ENCODE measurements at regions of chr11 and their contacts with region 1.

Region 1: GRCh38 chr11:66438504-66439466 is at the start of gene MRPL11:
- DNase-seq: peak; percentile 95
- ATAC-seq: peak; percentile 98
- H3K4me3 ChIP-seq: peak within 1 kb of the TSS; percentile 71 to 98 (median 78)
- H3K4me3 Mint-ChIP-seq: peak within 1 kb of the TSS; percentile 93
- H3K27ac ChIP-seq: peak within 1 kb of the TSS; percentile 76 to 79
- H3K27ac Mint-ChIP-seq: peak within 1 kb of the TSS; percentile 98
- H3K4me1 ChIP-seq: peaks cover 6 to 10% of the 10 kb centered on the region in 2 donors
- H3K4me1 Mint-ChIP-seq: peaks cover 14% of the 10 kb centered on the region
- H3K27me3 ChIP-seq: no peaks in the 10 kb centered on the region
- H3K27me3 Mint-ChIP-seq: no peaks in the 10 kb centered on the region
- CTCF ChIP-seq: peak; percentile 77
- total RNA-seq, gene MRPL11: 26.7 and 29.2 TPM in 2 replicates

Region 2: GRCh38 chr11:65680192-65680743 is 758.5 kb before region 1 on chr11:
- CTCF ChIA-PET with region 1: no interaction called
- POLR2A ChIA-PET with region 1: no interaction called
- intact Hi-C with region 1: no loop called
- DNase-seq: no peak
- ATAC-seq: no peak
- H3K4me3 ChIP-seq: no peak overlapping the region
- H3K4me3 Mint-ChIP-seq: no peak overlapping the region
- H3K27ac ChIP-seq: no peak overlapping the region
- H3K27ac Mint-ChIP-seq: no peak overlapping the region
- H3K4me1 ChIP-seq: no peaks in the 10 kb centered on the region
- H3K4me1 Mint-ChIP-seq: no peaks in the 10 kb centered on the region
- H3K27me3 ChIP-seq: no peaks in the 10 kb centered on the region
- H3K27me3 Mint-ChIP-seq: peaks cover 4% of the 10 kb centered on the region
- CTCF ChIP-seq: no peak

Region 3: DNA sequence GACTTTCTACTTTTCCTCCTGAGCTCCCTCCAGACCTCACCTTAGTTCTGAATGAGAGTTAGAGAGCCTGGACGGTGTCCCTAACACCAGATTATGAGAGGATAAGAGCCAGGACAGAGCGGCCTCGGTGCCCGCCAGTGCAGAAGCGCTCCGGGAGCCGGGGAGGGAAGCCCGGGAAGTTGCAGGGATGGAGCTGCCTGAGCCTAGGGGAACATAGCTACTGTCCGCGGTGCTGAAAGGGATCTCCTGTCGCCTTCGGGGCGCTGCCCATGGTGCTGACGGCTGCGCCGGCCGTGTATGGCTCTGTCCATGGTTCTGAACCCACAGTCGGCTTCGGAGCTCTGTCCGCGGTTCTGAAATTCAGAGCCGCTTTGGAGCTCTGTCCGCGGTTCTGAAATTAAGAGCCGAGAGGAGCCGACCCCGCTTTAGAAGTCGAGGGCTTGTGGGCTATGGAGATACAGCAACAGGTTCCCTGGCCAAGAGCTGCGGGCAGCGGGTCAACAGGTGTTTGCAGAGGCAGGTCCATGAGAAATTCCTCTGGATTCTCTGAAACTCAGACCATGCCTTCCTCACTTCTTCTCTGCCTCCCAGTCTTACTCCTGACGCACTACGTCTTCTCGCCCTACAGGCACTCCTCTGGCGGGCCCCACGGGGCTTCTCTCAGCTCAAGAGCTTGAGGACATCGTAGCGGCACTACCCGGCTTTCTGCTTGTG is 17.1 kb before region 1 on chr11:
- CTCF ChIA-PET with region 1: interaction called, 9 read pairs
- POLR2A ChIA-PET with region 1: no interaction called
- intact Hi-C with region 1: loop called (anchors 2 kb)
- DNase-seq: peak; percentile 92
- ATAC-seq: peak; percentile 95
- H3K4me3 ChIP-seq: no peak overlapping the region
- H3K4me3 Mint-ChIP-seq: no peak overlapping the region
- H3K27ac ChIP-seq: no peak overlapping the region
- H3K27ac Mint-ChIP-seq: peak overlapping the region; percentile 81
- H3K4me1 ChIP-seq: peaks cover 8 to 15% of the 10 kb centered on the region in 2 donors
- H3K4me1 Mint-ChIP-seq: peaks cover 3% of the 10 kb centered on the region
- H3K27me3 ChIP-seq: peaks cover 0 to 45% (median 34%) of the 10 kb centered on the region in 4 experiments
- H3K27me3 Mint-ChIP-seq: peaks cover 31% of the 10 kb centered on the region
- CTCF ChIP-seq: no peak

Region 4: GRCh38 chr11:66459138-66459778 is 20.5 kb after region 1 on chr11:
- CTCF ChIA-PET with region 1: interaction called, 15 read pairs
- POLR2A ChIA-PET with region 1: interaction called, 4 read pairs
- intact Hi-C with region 1: no loop called
- DNase-seq: peak; percentile 55
- ATAC-seq: peak; percentile 62
- H3K4me3 ChIP-seq: no peak overlapping the region
- H3K4me3 Mint-ChIP-seq: peak overlapping the region; percentile 43
- H3K27ac ChIP-seq: peak overlapping the region; percentile 6 to 37
- H3K27ac Mint-ChIP-seq: peak overlapping the region; percentile 71
- H3K4me1 ChIP-seq: peaks cover 45 to 46% of the 10 kb centered on the region in 2 donors
- H3K4me1 Mint-ChIP-seq: peaks cover 41% of the 10 kb centered on the region
- H3K27me3 ChIP-seq: no peaks in the 10 kb centered on the region
- H3K27me3 Mint-ChIP-seq: no peaks in the 10 kb centered on the region
- CTCF ChIP-seq: no peak

Region 5: GRCh38 chr11:66466225-66467027 is 27.6 kb after region 1 on chr11 and contains the start of gene PELI3:
- CTCF ChIA-PET with region 1: interaction called, 14 read pairs
- POLR2A ChIA-PET with region 1: interaction called, 8 read pairs
- intact Hi-C with region 1: loop called (anchors 1 kb)
- DNase-seq: peak; percentile 97
- ATAC-seq: peak; percentile 92
- H3K4me3 ChIP-seq: peak within 1 kb of the TSS; percentile 19 to 82 (median 71)
- H3K4me3 Mint-ChIP-seq: peak within 1 kb of the TSS; percentile 95
- H3K27ac ChIP-seq: peak within 1 kb of the TSS; percentile 81 to 84
- H3K27ac Mint-ChIP-seq: peak within 1 kb of the TSS; percentile 89
- H3K4me1 ChIP-seq: peaks cover 35 to 40% of the 10 kb centered on the region in 2 donors
- H3K4me1 Mint-ChIP-seq: peaks cover 35% of the 10 kb centered on the region
- H3K27me3 ChIP-seq: no peaks in the 10 kb centered on the region
- H3K27me3 Mint-ChIP-seq: no peaks in the 10 kb centered on the region
- CTCF ChIP-seq: no peak
- total RNA-seq, gene PELI3: 15.6 and 17.0 TPM in 2 replicates

Region 6: GRCh38 chr11:66480117-66480938 is 41.5 kb after region 1 on chr11 and contains the start of gene DPP3:
- CTCF ChIA-PET with region 1: interaction called, 9 read pairs
- POLR2A ChIA-PET with region 1: interaction called, 15 read pairs
- intact Hi-C with region 1: loop called (anchors 1 kb)
- DNase-seq: peak; percentile 96
- ATAC-seq: peak; percentile 97
- H3K4me3 ChIP-seq: peak within 1 kb of the TSS; percentile 36 to 92 (median 71)
- H3K4me3 Mint-ChIP-seq: peak within 1 kb of the TSS; percentile 92
- H3K27ac ChIP-seq: peak within 1 kb of the TSS; percentile 63 to 85
- H3K27ac Mint-ChIP-seq: peak within 1 kb of the TSS; percentile 93
- H3K4me1 ChIP-seq: peaks cover 10 to 20% of the 10 kb centered on the region in 2 donors
- H3K4me1 Mint-ChIP-seq: peaks cover 20% of the 10 kb centered on the region
- H3K27me3 ChIP-seq: no peaks in the 10 kb centered on the region
- H3K27me3 Mint-ChIP-seq: no peaks in the 10 kb centered on the region
- CTCF ChIP-seq: no peak
- total RNA-seq, gene DPP3: 21.5 and 22.7 TPM in 2 replicates

Region 7: GRCh38 chr11:66510271-66510989 is 71.6 kb after region 1 on chr11 and contains the start of gene BBS1:
- CTCF ChIA-PET with region 1: no interaction called
- POLR2A ChIA-PET with region 1: no interaction called
- intact Hi-C with region 1: loop called (anchors 2 kb)
- DNase-seq: peak; percentile 87
- ATAC-seq: peak; percentile 94
- H3K4me3 ChIP-seq: peak within 1 kb of the TSS; percentile 55 to 89 (median 85)
- H3K4me3 Mint-ChIP-seq: peak within 1 kb of the TSS; percentile 91
- H3K27ac ChIP-seq: peak within 1 kb of the TSS in 1 of 2 donors; percentile 40
- H3K27ac Mint-ChIP-seq: peak within 1 kb of the TSS; percentile 61
- H3K4me1 ChIP-seq: peaks cover 11 to 14% of the 10 kb centered on the region in 2 donors
- H3K4me1 Mint-ChIP-seq: peaks cover 16% of the 10 kb centered on the region
- H3K27me3 ChIP-seq: no peaks in the 10 kb centered on the region
- H3K27me3 Mint-ChIP-seq: no peaks in the 10 kb centered on the region
- CTCF ChIP-seq: no peak
- total RNA-seq, gene BBS1: 52.5 and 56.3 TPM in 2 replicates

Region 8: DNA sequence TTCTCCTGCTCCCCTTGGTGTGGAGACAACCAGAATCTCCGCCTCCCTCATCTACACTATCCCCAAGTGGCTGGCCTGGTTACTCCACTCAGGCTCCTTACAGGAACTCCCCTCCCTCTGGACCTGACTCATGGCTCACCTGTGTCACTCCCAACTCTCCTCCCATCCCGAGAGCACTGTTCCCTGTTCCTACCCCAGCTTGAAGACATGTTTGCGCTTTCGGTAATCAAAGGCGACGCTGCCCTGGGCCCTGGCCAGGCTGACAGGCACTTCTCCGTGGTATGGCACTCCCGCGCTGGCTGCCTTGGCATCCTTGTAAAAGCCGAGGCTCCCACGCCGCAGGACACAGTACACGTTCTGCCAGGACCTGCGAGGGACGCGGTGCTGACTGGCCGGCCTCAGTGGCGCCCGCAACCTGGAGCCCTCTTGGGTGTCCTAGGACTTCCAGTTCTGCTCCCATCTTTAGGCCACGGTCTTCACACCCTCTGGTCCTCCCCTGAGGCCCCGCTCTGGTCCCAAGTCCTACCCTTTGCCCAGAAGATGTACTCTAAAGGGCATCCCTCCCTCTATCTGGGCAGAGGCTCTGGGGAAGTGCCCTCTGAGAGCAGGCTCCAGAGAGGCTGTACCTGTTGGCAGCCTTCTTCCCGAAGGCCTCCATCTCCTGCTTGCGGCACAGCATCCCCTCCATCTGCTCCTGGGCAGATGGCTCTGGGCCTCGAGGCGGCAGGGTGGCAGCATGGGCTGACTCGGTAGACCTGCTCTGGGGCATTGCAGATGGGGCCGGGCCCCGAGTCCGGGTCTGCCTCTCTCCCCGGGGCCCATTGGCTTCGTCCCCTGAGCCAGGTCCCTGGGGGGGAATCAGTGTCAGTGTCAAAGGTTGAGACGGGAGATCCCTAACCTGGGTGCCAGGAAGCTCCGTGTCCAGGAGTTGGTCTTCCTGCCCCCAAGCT is 248.3 kb after region 1 on chr11:
- CTCF ChIA-PET with region 1: no interaction called
- POLR2A ChIA-PET with region 1: no interaction called
- intact Hi-C with region 1: no loop called
- DNase-seq: no peak
- ATAC-seq: no peak
- H3K4me3 ChIP-seq: no peak overlapping the region
- H3K4me3 Mint-ChIP-seq: no peak overlapping the region
- H3K27ac ChIP-seq: no peak overlapping the region
- H3K27ac Mint-ChIP-seq: no peak overlapping the region
- H3K4me1 ChIP-seq: no peaks in the 10 kb centered on the region
- H3K4me1 Mint-ChIP-seq: no peaks in the 10 kb centered on the region
- H3K27me3 ChIP-seq: no peaks in the 10 kb centered on the region
- H3K27me3 Mint-ChIP-seq: no peaks in the 10 kb centered on the region
- CTCF ChIP-seq: no peak